Heart left ventricle (tissue), 16 donors: ENCODE measurements at regions of chr17 and their contacts with region 1.

Region 1: GRCh38 chr17:29589524-29590410 is at the start of gene GIT1:
- DNase-seq: peak; percentile 89 to 94 (median 90)
- ATAC-seq: peak; percentile 62 to 84 (median 72)
- H3K4me3 ChIP-seq: peak within 1 kb of the TSS; percentile 59 to 98 (median 87)
- H3K27ac ChIP-seq: peak within 1 kb of the TSS; percentile 87 to 97 (median 90)
- H3K4me1 ChIP-seq: peaks cover 5 to 87% (median 73%) of the 10 kb centered on the region in 12 donors
- H3K27me3 ChIP-seq: no peaks in the 10 kb centered on the region
- CTCF ChIP-seq: peak in 3 of 12 donors; percentile 15 to 37 (median 18)
- POLR2A ChIP-seq: peak in 1 of 2 donors; percentile 60
- total RNA-seq, gene GIT1: 23.1 to 52.9 (median 31.4) TPM

Region 2: GRCh38 chr17:29568331-29569244 is 21.2 kb before region 1 on chr17 and contains the start of gene TP53I13:
- intact Hi-C with region 1: loop called in 1 of 10 experiments (anchors 2 kb)
- DNase-seq: peak; percentile 88 to 94 (median 92)
- ATAC-seq: peak; percentile 63 to 83 (median 72)
- H3K4me3 ChIP-seq: peak within 1 kb of the TSS; percentile 66 to 86 (median 81)
- H3K27ac ChIP-seq: peak within 1 kb of the TSS; percentile 66 to 93 (median 88)
- H3K4me1 ChIP-seq: peaks cover 5 to 71% (median 41%) of the 10 kb centered on the region in 12 donors
- H3K27me3 ChIP-seq: no peaks in the 10 kb centered on the region
- CTCF ChIP-seq: no peak
- POLR2A ChIP-seq: peak in 1 of 2 donors; percentile 83
- total RNA-seq, gene TP53I13: 23.8 to 65.5 (median 38.3) TPM

Region 3: DNA sequence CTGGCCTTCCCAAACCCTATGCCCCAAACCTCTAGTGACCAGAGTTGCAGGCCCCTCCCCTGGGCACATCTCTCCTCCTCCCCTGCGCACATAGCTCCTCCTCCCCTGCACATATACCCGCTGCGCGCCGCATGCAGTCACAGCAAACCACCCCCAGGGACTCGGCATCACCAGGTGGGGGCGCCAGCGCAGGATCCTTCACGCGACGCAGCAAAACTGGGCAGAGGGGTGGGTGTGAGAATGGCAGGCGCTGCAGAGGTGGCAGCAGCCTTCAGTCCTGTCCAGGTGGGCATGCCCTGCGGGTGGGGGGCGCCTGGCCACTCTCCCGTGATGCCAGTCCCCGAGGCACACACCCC is 27.3 kb after region 1 on chr17:
- intact Hi-C with region 1: loop called in 3 of 10 experiments (anchors 2 to 5 kb)
- DNase-seq: peak in 4 of 5 donors; percentile 64 to 89 (median 71)
- ATAC-seq: no peak
- H3K4me3 ChIP-seq: peak overlapping the region in 9 of 12 donors; percentile 27 to 61 (median 43)
- H3K27ac ChIP-seq: no peak overlapping the region
- H3K4me1 ChIP-seq: peaks cover 6 to 93% (median 72%) of the 10 kb centered on the region in 12 donors
- H3K27me3 ChIP-seq: no peaks in the 10 kb centered on the region
- CTCF ChIP-seq: peak in 10 of 12 donors; percentile 17 to 56 (median 38)
- POLR2A ChIP-seq: no peak

Region 4: DNA sequence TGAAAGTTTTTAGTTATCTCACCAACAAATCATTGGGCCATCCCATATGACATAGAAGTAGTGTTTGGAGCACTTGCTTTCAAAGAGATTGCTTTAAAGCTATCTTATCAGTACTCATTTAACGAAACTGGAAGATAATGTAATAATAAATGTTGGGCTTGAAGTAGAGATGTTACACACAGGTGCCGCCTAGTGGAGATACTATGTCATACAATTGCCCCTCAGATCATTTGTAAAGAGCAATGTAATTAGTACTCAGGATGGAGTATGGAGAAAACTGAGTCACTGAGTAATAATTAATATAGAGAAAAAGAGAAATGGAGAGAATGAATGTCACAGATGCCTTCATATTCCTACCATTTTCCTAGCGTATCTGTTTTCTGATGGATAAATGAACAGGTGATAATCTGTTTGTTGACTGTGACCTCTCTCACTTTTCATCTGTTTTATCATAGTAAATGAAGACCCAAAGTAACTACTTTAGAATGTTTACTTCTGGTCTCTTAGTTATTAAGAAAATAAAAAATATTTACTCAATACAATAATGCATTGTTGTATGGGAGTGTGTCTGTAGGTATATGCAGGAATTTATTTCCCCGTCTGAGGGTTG is 432.0 kb after region 1 on chr17:
- intact Hi-C with region 1: loop called in 1 of 10 experiments (anchors 5 kb)
- DNase-seq: peak in 1 of 5 donors; percentile 9
- ATAC-seq: no peak
- H3K4me3 ChIP-seq: no peak overlapping the region
- H3K27ac ChIP-seq: no peak overlapping the region
- H3K4me1 ChIP-seq: peaks cover 0 to 3% (median 0%) of the 10 kb centered on the region in 12 donors
- H3K27me3 ChIP-seq: peaks cover 0 to 5% (median 0%) of the 10 kb centered on the region in 9 donors
- CTCF ChIP-seq: peak; percentile 60 to 80 (median 76)
- POLR2A ChIP-seq: no peak